ENCODE measurements at regions of chr20 and their contacts with region 1.

Region 1: GRCh38 chr20:49888345-49888966 is 26.9 kb downstream of the SPATA2 start:
- DNase-seq: peak; percentile 77
- H3K27ac ChIP-seq: peak overlapping the region; percentile 42
- CTCF ChIP-seq: peak; percentile 98

Region 2: GRCh38 chr20:49610701-49611538 is 277.5 kb before region 1 on chr20:
- CTCF ChIA-PET with region 1: interaction called, 23 read pairs
- POLR2A ChIA-PET with region 1: no interaction called
- DNase-seq: peak; percentile 93
- H3K27ac ChIP-seq: no peak overlapping the region
- CTCF ChIP-seq: peak; percentile 100

Region 3: DNA sequence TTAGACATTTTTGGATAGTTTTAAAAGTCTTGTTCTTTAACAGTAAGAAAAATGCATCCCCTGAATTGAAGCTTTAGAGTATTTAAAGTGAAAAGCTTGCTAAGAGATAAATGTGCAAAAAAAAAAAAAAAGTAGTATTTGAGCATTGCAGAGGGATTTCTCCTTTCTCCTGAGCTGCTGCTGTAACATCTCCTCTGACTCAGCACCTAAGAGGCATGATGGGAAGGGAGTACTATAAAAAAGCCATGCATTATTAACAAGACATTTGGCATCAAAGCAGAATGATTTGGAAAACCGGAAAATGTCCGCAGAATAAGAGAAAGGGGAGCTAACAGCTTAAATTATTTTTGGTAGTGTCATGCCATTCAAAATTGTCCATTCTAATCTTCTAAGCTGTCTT is 202.6 kb before region 1 on chr20:
- CTCF ChIA-PET with region 1: no interaction called
- POLR2A ChIA-PET with region 1: no interaction called
- DNase-seq: no peak
- H3K27ac ChIP-seq: no peak overlapping the region
- CTCF ChIP-seq: no peak

Region 4: GRCh38 chr20:49859846-49860245 is 28.6 kb before region 1 on chr20:
- CTCF ChIA-PET with region 1: interaction called, 23 read pairs
- POLR2A ChIA-PET with region 1: no interaction called
- DNase-seq: peak; percentile 97
- H3K27ac ChIP-seq: no peak overlapping the region
- CTCF ChIP-seq: no peak

Region 5: GRCh38 chr20:49877386-49877921 is 11.0 kb before region 1 on chr20:
- CTCF ChIA-PET with region 1: interaction called, 12 read pairs
- POLR2A ChIA-PET with region 1: no interaction called
- DNase-seq: no peak
- H3K27ac ChIP-seq: no peak overlapping the region
- CTCF ChIP-seq: no peak

Region 6: GRCh38 chr20:49915378-49916145 is 27.1 kb after region 1 on chr20 and contains the start of gene SPATA2:
- CTCF ChIA-PET with region 1: interaction called, 20 read pairs
- POLR2A ChIA-PET with region 1: no interaction called
- DNase-seq: peak; percentile 99
- H3K27ac ChIP-seq: peak within 1 kb of the TSS; percentile 98
- CTCF ChIP-seq: no peak

Measured in RWPE1 (cell line).